Activated naive CD4-positive, alpha-beta T cell treated with anti-CD3 and anti-CD28 coated beads for 36 hours (primary cell): ENCODE measurements at regions of chr11 and their contacts with region 1.

Region 1: DNA sequence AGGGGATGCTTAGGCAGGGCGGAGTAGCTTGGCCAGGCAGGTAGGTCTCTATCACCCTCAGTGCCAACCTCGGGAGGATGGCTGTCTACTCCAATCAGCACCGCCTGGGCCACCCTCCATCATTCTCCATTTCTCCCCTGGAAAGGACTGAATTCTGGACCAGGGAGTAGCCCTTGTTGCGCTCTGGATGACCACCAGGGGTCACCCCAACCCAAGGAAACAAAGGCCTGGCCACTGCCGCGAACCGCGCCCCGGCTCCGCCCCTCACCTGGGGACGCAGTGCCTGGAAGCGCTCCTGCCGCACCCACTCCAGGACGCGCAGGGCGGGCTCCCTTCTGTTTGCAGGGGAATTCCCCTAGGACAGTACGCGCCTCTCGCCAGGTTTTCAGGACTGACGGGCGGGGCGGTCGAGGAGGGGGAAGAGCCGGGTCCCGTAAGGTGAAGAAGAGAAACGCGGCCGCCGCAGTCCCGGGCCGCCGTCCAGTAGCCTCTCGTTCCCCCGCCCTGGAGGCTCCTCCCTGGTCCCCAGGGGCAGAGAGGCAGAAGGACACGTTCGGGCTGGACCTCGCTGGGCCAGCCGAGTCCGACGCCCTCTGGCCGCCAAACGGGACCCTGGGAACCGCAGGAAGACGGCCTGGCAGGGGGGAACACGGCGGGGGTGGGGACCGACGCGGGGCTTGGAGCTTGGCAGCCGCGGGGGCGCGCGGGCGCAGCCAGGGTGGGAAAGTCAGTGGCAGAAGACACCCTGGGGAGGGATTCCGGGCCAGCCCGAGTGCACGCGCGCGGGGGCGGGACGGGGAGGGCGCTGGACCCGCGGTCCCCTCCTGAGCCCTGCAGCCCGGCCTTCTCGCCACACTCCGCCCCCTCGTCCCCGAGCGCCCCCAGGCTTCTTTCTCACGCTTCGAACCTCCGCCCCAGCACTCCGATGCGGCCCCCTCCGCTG is 7.1 kb downstream of the SCN4B start:
- DNase-seq: peak; percentile 96
- H3K4me3 Mint-ChIP-seq: peak overlapping the region; percentile 77
- H3K27ac Mint-ChIP-seq: no peak overlapping the region
- H3K4me1 Mint-ChIP-seq: peaks cover 3% of the 10 kb centered on the region
- H3K27me3 Mint-ChIP-seq: peaks cover 40% of the 10 kb centered on the region

Region 2: GRCh38 chr11:118290923-118291322 is 145.4 kb after region 1 on chr11:
- CTCF ChIA-PET with region 1: interaction called, 17 read pairs
- intact Hi-C with region 1: loop called (anchors 1 kb)
- DNase-seq: peak; percentile 74
- H3K4me3 Mint-ChIP-seq: no peak overlapping the region
- H3K27ac Mint-ChIP-seq: no peak overlapping the region
- H3K4me1 Mint-ChIP-seq: peaks cover 28% of the 10 kb centered on the region
- H3K27me3 Mint-ChIP-seq: no peaks in the 10 kb centered on the region

Region 3: DNA sequence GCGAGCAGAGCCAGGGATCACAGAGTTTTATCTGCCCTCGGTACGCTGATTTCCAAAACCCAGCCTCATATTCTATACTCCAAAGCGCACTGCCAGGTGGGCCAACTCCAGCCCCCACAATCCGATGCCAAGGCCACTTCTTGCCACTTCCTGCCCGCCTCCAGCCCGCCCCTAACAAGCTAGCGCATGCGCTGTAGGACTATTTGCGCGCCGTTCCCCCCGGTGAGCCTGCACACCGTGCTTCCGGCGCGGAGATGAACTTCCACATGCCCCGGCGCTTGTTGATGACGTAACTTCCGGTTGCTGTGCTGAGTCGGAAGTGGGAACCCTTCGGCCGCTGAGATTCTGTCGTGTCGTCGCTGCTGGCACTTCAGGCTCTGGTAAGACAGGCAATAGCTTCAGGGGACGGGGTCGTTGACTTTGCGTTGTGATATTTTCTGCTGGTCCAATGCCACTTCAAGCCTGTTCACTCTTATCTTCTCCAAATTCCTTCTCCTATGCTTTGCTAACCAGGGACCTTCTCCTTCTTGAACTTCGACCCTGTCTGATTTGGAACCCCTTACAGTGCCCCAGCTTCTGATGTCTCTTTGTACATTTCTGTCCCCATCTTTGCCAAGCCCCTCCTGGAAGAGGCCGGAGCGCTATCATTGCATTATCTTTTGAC is 213.9 kb after region 1 on chr11 and contains the start of gene UBE4A:
- CTCF ChIA-PET with region 1: interaction called, 3 read pairs
- intact Hi-C with region 1: loop called (anchors 1 kb)
- DNase-seq: peak; percentile 100
- H3K4me3 Mint-ChIP-seq: peak within 1 kb of the TSS; percentile 99
- H3K27ac Mint-ChIP-seq: peak within 1 kb of the TSS; percentile 91
- H3K4me1 Mint-ChIP-seq: peaks cover 52% of the 10 kb centered on the region
- H3K27me3 Mint-ChIP-seq: no peaks in the 10 kb centered on the region
- total RNA-seq, gene UBE4A: 35.3 to 35.7 TPM

Region 4: GRCh38 chr11:118488480-118489109 is 343.0 kb after region 1 on chr11:
- CTCF ChIA-PET with region 1: no interaction called
- intact Hi-C with region 1: loop called (anchors 1 kb)
- DNase-seq: peak; percentile 92
- H3K4me3 Mint-ChIP-seq: no peak overlapping the region
- H3K27ac Mint-ChIP-seq: no peak overlapping the region
- H3K4me1 Mint-ChIP-seq: peaks cover 9% of the 10 kb centered on the region
- H3K27me3 Mint-ChIP-seq: no peaks in the 10 kb centered on the region

Region 5: DNA sequence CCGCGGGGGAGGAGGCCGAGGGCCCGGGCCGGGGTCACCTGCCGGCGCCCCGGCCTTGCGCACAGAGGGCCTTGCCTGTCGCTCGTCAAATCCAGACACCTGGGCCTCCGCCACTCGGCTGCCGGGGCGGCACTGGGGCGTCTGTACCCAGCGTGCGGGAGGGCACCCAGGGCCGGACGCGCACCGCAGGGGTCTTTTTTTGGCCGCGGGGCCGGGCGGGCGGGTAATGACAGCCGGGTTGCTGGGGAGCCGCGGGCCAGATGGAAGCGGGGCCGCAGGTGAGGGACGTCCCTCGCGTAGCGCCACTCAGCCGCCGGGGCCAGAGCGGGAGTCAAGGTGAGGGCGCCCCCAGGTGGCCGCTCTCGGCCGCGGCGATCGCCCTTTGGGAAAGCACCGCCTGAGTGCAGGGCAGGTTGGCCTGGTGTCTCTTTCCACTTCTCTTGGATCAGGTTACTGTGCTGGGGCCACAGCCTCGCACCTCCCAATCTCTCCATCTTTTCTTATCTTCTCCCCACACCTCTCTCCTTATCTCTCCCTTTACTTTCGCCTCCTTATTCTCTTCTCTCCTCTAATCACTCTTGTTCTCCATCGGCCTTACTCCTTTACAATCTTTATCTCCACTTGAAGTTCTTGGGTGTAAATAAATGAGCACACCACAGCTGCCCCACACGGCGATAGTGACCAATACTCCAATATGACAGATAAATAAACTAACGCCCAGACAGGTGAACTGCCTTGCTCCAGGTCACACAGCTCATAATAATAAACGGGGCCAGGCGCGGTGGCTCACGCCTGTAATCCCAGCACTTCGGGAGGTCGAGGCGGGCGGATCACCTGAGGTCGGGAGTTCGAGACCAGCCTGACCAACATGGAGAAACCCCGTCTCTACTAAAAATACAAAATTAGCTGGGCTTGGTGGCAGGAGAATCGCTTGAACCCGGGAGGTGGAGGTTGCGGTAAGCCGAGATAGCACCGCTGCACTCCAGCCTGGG is 465.5 kb after region 1 on chr11:
- CTCF ChIA-PET with region 1: no interaction called
- intact Hi-C with region 1: loop called (anchors 5 kb)
- DNase-seq: peak; percentile 90
- H3K4me3 Mint-ChIP-seq: peak overlapping the region; percentile 51
- H3K27ac Mint-ChIP-seq: no peak overlapping the region
- H3K4me1 Mint-ChIP-seq: peaks cover 20% of the 10 kb centered on the region
- H3K27me3 Mint-ChIP-seq: peaks cover 17% of the 10 kb centered on the region